Activated CD8-positive, alpha-beta T cell treated with anti-CD3 and anti-CD28 coated beads for 36 hours (primary cell): ENCODE measurements at regions of chr18 and their contacts with region 1.

Region 1: GRCh38 chr18:23828426-23828825 is 139.2 kb downstream of the LAMA3 start:
- DNase-seq: peak; percentile 64
- ATAC-seq: peak; percentile 97
- H3K4me3 Mint-ChIP-seq: no peak overlapping the region
- H3K27ac Mint-ChIP-seq: peak overlapping the region; percentile 65
- H3K4me1 Mint-ChIP-seq: peaks cover 40% of the 10 kb centered on the region
- H3K27me3 Mint-ChIP-seq: no peaks in the 10 kb centered on the region
- CTCF ChIP-seq: no peak

Region 2: GRCh38 chr18:23779696-23780303 is 48.6 kb before region 1 on chr18:
- CTCF ChIA-PET with region 1: no interaction called
- POLR2A ChIA-PET with region 1: no interaction called
- intact Hi-C with region 1: no loop called
- DNase-seq: no peak
- ATAC-seq: no peak
- H3K4me3 Mint-ChIP-seq: no peak overlapping the region
- H3K27ac Mint-ChIP-seq: no peak overlapping the region
- H3K4me1 Mint-ChIP-seq: no peaks in the 10 kb centered on the region
- H3K27me3 Mint-ChIP-seq: no peaks in the 10 kb centered on the region
- CTCF ChIP-seq: no peak

Region 3: GRCh38 chr18:23861805-23862470 is 33.5 kb after region 1 on chr18:
- CTCF ChIA-PET with region 1: interaction called, 3 read pairs
- POLR2A ChIA-PET with region 1: no interaction called
- intact Hi-C with region 1: loop called (anchors 5 kb)
- DNase-seq: no peak
- ATAC-seq: no peak
- H3K4me3 Mint-ChIP-seq: no peak overlapping the region
- H3K27ac Mint-ChIP-seq: peak overlapping the region; percentile 55
- H3K4me1 Mint-ChIP-seq: peaks cover 49% of the 10 kb centered on the region
- H3K27me3 Mint-ChIP-seq: no peaks in the 10 kb centered on the region
- CTCF ChIP-seq: no peak

Region 4: DNA sequence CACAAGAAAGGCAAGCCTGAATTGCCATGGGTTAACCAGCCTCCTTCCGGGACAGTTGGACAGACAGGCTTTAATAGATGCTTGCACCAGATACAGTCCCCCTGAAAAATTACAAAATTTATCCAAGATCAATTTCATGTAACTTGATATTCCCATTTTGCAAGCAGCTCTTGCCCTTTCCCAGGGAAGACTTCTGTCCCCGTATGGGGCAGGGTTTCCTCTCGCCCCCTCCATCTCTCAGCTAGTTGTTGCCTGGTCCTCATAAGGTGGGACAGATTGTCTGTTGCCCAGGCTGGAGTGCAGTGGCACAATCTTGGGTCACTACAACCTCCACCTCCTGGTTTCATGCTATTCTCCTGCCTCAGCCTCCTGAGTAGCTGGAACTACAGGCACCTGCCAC is 247.3 kb after region 1 on chr18:
- CTCF ChIA-PET with region 1: no interaction called
- POLR2A ChIA-PET with region 1: no interaction called
- intact Hi-C with region 1: loop called (anchors 1 kb)
- DNase-seq: no peak
- ATAC-seq: peak; percentile 18
- H3K4me3 Mint-ChIP-seq: no peak overlapping the region
- H3K27ac Mint-ChIP-seq: peak overlapping the region; percentile 83
- H3K4me1 Mint-ChIP-seq: peaks cover 40% of the 10 kb centered on the region
- H3K27me3 Mint-ChIP-seq: no peaks in the 10 kb centered on the region
- CTCF ChIP-seq: no peak

Region 5: DNA sequence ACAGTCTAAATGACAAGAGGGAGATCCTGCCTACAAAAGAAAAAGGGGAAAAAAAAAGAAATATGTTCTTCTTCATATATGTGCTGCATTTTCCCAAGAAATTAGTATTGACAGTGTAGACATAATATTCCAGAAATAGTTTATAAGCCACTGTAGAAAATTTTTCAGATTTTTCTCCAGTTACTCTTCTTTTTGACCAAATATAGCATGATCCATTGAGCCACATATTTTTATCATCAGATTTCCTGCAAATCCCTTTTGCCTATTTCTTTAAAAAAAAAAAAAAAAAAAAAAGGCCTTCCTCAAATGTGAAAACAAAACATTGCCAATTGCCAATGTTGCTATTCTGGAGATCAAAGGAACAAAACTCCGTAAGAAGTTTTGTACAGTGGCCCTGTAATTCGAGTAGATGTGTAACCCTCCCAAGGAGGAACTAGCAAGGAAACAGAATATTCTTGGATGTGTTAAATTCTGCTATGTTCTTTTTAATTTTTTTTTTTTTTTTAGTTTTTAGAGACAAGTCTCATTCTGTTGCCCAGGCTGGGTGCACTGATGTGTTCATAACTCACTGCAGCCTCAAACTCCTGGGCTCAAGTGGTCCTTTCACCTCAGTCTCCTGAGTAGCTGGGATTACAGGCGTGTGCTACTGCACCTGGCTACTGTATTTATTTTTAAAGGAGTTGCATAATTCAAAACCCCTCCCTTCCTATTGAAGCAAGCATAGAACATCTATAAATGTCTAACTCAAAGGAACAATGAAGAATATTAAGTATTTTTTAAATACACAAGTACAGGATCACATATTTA is 297.9 kb after region 1 on chr18:
- CTCF ChIA-PET with region 1: no interaction called
- POLR2A ChIA-PET with region 1: no interaction called
- intact Hi-C with region 1: loop called (anchors 10 kb)
- DNase-seq: no peak
- ATAC-seq: no peak
- H3K4me3 Mint-ChIP-seq: no peak overlapping the region
- H3K27ac Mint-ChIP-seq: no peak overlapping the region
- H3K4me1 Mint-ChIP-seq: no peaks in the 10 kb centered on the region
- H3K27me3 Mint-ChIP-seq: no peaks in the 10 kb centered on the region
- CTCF ChIP-seq: no peak